MCF 10A (cell line): ENCODE measurements at regions of chr19 and their contacts with region 1.

Region 1: GRCh38 chr19:6076675-6077463 is 33.4 kb downstream of the RFX2 start:
- DNase-seq: peak; percentile 82
- H3K4me3 Mint-ChIP-seq: peak overlapping the region; percentile 49
- H3K27ac Mint-ChIP-seq: peak overlapping the region; percentile 94
- H3K4me1 Mint-ChIP-seq: peaks cover 25% of the 10 kb centered on the region
- H3K27me3 Mint-ChIP-seq: no peaks in the 10 kb centered on the region
- CTCF ChIP-seq: no peak

Region 2: GRCh38 chr19:6048808-6049405 is 28.0 kb before region 1 on chr19:
- CTCF ChIA-PET with region 1: interaction called, 13 read pairs
- POLR2A ChIA-PET with region 1: no interaction called
- intact Hi-C with region 1: no loop called
- DNase-seq: peak; percentile 89
- H3K4me3 Mint-ChIP-seq: no peak overlapping the region
- H3K27ac Mint-ChIP-seq: no peak overlapping the region
- H3K4me1 Mint-ChIP-seq: peaks cover 7% of the 10 kb centered on the region
- H3K27me3 Mint-ChIP-seq: no peaks in the 10 kb centered on the region
- CTCF ChIP-seq: peak; percentile 89

Region 3: GRCh38 chr19:6065685-6066374 is 11.0 kb before region 1 on chr19:
- CTCF ChIA-PET with region 1: interaction called, 4 read pairs
- POLR2A ChIA-PET with region 1: interaction called, 30 read pairs
- intact Hi-C with region 1: no loop called
- DNase-seq: no peak
- H3K4me3 Mint-ChIP-seq: no peak overlapping the region
- H3K27ac Mint-ChIP-seq: no peak overlapping the region
- H3K4me1 Mint-ChIP-seq: peaks cover 41% of the 10 kb centered on the region
- H3K27me3 Mint-ChIP-seq: no peaks in the 10 kb centered on the region
- CTCF ChIP-seq: no peak

Region 4: GRCh38 chr19:6092329-6093286 is 15.7 kb after region 1 on chr19:
- CTCF ChIA-PET with region 1: interaction called, 6 read pairs
- POLR2A ChIA-PET with region 1: interaction called, 49 read pairs
- intact Hi-C with region 1: no loop called
- DNase-seq: peak; percentile 88
- H3K4me3 Mint-ChIP-seq: peak overlapping the region; percentile 66
- H3K27ac Mint-ChIP-seq: peak overlapping the region; percentile 97
- H3K4me1 Mint-ChIP-seq: peaks cover 32% of the 10 kb centered on the region
- H3K27me3 Mint-ChIP-seq: no peaks in the 10 kb centered on the region
- CTCF ChIP-seq: no peak

Region 5: DNA sequence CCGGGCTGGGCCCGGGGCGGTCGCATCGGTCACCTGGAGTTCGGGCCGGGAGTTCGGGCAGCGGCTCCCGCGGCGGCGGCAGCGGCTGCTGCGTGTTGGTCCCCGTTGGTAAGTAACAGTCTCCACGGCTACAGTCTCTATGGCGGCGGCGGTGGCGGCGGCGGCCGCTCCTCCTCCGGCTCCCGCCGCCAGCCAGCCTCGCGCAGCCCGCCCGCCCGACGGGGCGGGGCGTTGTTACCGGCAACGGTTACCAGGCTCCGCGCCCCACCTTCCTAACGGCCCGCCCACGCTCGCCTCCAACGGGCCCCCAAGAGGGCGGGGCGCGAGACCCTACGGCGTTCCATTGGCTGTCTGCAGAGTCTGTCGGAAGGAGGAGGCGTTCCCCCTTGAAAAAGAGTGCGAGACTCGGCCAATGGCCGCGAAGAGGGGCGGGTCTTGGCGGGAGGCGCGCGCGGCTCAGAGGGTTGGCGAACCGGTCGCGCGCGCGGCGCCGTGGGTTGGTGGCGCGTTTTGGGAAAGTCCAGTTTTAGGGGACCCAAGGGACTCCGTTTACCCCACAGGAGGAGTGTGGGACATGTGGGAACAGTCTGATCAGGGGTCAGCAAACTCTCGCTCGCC is 33.6 kb after region 1 on chr19 and contains the start of gene RFX2:
- CTCF ChIA-PET with region 1: no interaction called
- POLR2A ChIA-PET with region 1: interaction called, 20 read pairs
- intact Hi-C with region 1: no loop called
- DNase-seq: peak; percentile 100
- H3K4me3 Mint-ChIP-seq: peak within 1 kb of the TSS; percentile 88
- H3K27ac Mint-ChIP-seq: peak within 1 kb of the TSS; percentile 95
- H3K4me1 Mint-ChIP-seq: peaks cover 28% of the 10 kb centered on the region
- H3K27me3 Mint-ChIP-seq: no peaks in the 10 kb centered on the region
- CTCF ChIP-seq: no peak
- total RNA-seq, gene RFX2: 9.9 and 10.7 TPM in 2 replicates

Region 6: DNA sequence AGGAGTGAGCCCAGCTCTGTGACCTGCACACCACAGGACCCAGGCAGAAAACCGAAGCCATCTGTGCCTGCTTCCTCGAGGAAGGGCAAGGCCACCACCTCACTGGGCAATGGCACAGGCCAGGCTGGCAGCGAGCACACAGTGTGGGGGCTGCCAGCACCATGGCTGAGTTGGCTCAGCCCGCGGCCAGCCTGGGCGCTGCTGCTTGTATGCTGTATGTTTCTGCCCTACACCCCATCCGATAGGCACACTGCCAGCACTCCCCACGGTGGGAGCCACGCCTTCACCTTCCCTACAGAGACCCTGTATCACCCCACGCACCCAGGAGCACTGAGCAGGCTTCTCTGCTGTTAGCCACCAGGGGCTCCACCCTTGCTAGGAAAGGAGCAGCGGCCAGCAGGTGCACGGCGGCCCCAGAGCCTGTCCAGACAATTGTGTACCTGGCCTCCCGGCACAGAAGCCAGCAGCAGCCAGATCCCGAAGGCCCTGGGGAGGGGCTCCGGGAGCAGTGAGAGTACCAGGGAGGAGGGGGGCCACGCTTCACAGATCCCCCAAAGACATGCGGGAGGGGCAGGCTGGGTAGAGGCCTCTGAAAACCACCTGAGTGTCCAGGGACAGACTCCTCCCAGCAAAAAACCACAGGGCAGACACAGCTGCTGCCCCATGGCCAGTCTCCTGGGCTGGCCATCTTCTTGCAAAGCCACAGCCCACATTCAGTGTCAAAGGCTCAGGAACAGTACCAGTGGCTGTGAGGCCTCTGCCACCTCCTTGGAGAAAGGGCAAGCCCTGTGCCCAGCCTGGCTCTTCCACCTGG is 146.8 kb after region 1 on chr19:
- CTCF ChIA-PET with region 1: no interaction called
- POLR2A ChIA-PET with region 1: no interaction called
- intact Hi-C with region 1: no loop called
- DNase-seq: no peak
- H3K4me3 Mint-ChIP-seq: no peak overlapping the region
- H3K27ac Mint-ChIP-seq: peak overlapping the region; percentile 42
- H3K4me1 Mint-ChIP-seq: peaks cover under 1% of the 10 kb centered on the region
- H3K27me3 Mint-ChIP-seq: no peaks in the 10 kb centered on the region
- CTCF ChIP-seq: no peak

Region 7: DNA sequence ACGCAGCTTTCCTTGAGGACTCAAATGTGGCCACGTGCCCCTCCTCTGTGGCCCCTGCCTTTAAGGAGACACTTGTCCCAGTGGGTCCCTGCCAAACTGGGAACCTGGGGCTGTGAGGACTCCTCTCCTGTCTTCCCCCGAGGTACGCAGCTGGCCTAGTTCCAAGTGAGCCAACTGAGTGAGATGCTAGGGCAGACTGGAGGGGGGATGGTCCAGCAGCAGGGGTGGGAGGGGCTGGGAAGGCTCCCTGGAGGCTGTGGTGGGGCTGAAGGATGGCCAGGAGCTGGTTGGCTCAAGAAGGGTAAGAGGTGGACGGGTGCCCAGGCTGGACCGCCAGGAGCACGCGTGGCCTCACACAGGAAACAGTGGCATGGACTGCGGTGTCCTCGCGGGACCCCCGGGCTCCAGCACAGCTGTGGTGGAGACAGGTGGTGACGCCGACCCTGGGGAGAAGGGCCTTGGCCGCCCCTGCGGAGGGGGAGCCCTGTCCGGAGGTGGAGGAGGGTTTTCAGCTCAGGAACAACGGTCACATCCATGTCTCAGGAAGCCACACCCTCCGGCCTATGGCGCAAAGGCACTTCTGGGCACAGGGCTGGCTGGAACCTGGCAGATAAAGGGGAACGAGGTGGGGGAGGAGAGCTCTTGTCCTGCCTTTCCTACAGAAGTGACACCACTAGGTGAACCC is 157.1 kb after region 1 on chr19:
- CTCF ChIA-PET with region 1: no interaction called
- POLR2A ChIA-PET with region 1: no interaction called
- intact Hi-C with region 1: no loop called
- DNase-seq: peak; percentile 69
- H3K4me3 Mint-ChIP-seq: peak overlapping the region; percentile 33
- H3K27ac Mint-ChIP-seq: no peak overlapping the region
- H3K4me1 Mint-ChIP-seq: peaks cover 51% of the 10 kb centered on the region
- H3K27me3 Mint-ChIP-seq: no peaks in the 10 kb centered on the region
- CTCF ChIP-seq: no peak